A549 (cell line): ENCODE measurements at regions of chr17 and their contacts with region 1.

Region 1: GRCh38 chr17:37406635-37407461 is at the starts of genes ACACA and TADA2A:
- DNase-seq: peak; percentile 89 to 93
- ATAC-seq: peak; percentile 96 to 97
- H3K4me3 ChIP-seq: peak within 1 kb of the TSS; percentile 76
- H3K27ac ChIP-seq: peak within 1 kb of the TSS; percentile 91 to 98
- H3K4me1 ChIP-seq: peaks cover 16% of the 10 kb centered on the region; the same call in 2 of the 3 replicates
- CTCF ChIP-seq: no peak
- EP300 ChIP-seq: no peak
- POLR2A ChIP-seq: peak; percentile 90
- RAD21 ChIP-seq: 0 out of 5 replicates have a peak, but pooled peaks of 1 of the 2 experiments have one; percentile 10
- polyA plus RNA-seq, gene ACACA: 112 and 113 TPM in 2 replicates
- polyA plus RNA-seq, gene TADA2A: 22.2 and 27.1 TPM in 2 replicates

Region 2: DNA sequence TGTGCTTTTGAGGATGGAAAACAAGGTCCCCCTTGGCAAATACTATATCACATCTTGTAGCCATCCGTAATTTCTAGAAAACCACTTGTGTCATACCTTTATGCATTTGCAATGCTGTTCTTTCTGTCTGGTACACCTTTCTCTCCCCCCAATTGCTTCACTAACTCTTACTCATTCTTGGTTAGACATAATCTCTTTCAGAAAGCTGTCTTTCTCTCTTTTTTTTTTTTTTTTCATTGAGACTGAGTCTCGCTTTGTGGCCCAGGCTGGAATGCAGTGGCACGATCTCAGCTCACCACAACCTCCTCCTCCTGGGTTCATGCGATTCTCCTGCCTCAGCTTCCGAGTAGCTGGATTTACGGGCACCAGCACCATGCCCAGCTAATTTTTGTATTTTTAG is 126.0 kb before region 1 on chr17:
- CTCF ChIA-PET with region 1: no interaction called
- POLR2A ChIA-PET with region 1: no interaction called
- DNase-seq: no peak
- ATAC-seq: no peak
- H3K4me3 ChIP-seq: no peak overlapping the region
- H3K27ac ChIP-seq: no peak overlapping the region
- H3K4me1 ChIP-seq: peaks cover 21% of the 10 kb centered on the region
- CTCF ChIP-seq: no peak
- EP300 ChIP-seq: no peak
- POLR2A ChIP-seq: no peak
- RAD21 ChIP-seq: no peak

Region 3: DNA sequence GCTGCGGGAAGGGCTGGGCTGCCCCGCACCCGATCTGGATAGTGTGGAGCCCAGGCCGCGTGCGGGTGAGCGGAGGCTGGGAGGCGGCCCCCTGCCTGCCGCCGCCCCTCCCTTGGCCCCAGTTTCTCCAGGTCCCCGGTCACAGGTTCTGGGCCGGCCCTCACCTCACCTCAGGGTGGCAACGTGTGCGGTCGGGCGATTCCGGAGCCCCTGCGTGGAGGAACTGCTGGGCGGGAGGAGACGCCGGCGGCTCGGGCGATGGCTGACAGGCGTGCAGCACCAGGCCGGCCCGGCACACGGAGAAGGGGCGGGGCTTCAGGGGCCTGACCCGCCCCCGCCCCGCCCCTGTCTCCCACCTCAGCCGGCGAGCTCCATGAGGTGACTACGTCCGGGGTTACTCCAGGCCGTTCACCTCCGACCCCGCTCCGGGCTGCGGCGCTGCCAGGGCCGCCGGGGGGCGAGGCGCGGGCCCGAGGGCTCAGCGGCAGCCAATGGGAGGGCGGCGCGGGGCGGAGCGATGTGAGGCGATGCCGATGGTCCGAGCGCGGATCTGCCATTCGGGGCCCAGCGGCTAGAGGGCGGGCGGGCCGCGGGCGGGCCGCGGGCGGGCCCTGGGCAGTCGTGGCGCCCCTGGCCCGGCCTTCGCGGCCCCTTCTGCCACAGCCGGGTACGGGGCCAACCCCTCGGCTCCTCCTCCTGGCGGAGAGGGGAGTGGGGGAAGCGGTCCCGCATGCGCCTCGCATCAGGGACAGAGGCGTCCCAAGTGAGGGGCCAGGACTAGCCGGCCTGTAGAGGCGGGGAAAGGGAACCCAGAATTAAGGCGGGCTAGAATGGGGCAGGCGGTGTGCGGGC is 47.8 kb before region 1 on chr17:
- CTCF ChIA-PET with region 1: interaction called, 3 read pairs
- POLR2A ChIA-PET with region 1: interaction called, 14 read pairs
- DNase-seq: peak; percentile 96 to 98
- ATAC-seq: peak; percentile 89 to 90
- H3K4me3 ChIP-seq: peak overlapping the region; percentile 88
- H3K27ac ChIP-seq: peak overlapping the region; percentile 92 to 94
- H3K4me1 ChIP-seq: peaks cover 42% of the 10 kb centered on the region
- CTCF ChIP-seq: peak; percentile 9; the same call in 1 of the 3 replicates
- EP300 ChIP-seq: no peak
- POLR2A ChIP-seq: peak; percentile 86
- RAD21 ChIP-seq: no peak

Region 4: GRCh38 chr17:37430051-37430627 is 23.3 kb after region 1 on chr17:
- CTCF ChIA-PET with region 1: interaction called, 10 read pairs
- POLR2A ChIA-PET with region 1: interaction called, 10 read pairs
- DNase-seq: no peak
- ATAC-seq: peak; percentile 39; a peak in 1 of 6 replicates
- H3K4me3 ChIP-seq: no peak overlapping the region
- H3K27ac ChIP-seq: peak overlapping the region; percentile 6 to 12; a peak in 2 of 6 replicates
- H3K4me1 ChIP-seq: peaks cover 14% of the 10 kb centered on the region; the same call in 2 of the 3 replicates
- CTCF ChIP-seq: no peak
- EP300 ChIP-seq: no peak
- POLR2A ChIP-seq: no peak
- RAD21 ChIP-seq: no peak

Region 5: GRCh38 chr17:37609170-37610040 is 202.6 kb after region 1 on chr17 and contains the start of gene SYNRG:
- CTCF ChIA-PET with region 1: interaction called, 5 read pairs
- POLR2A ChIA-PET with region 1: interaction called, 11 read pairs
- DNase-seq: peak; percentile 98 to 99
- ATAC-seq: peak; percentile 97
- H3K4me3 ChIP-seq: peak within 1 kb of the TSS; percentile 72
- H3K27ac ChIP-seq: peak within 1 kb of the TSS; percentile 86 to 93
- H3K4me1 ChIP-seq: peaks cover 20% of the 10 kb centered on the region; the same call in 1 of the 3 replicates
- CTCF ChIP-seq: peak; percentile 33; the same call in 1 of the 3 replicates
- EP300 ChIP-seq: peak in 1 of 2 experiments; percentile 20; a peak in 1 of 5 replicates
- POLR2A ChIP-seq: peak; percentile 90
- RAD21 ChIP-seq: peak; percentile 36 to 52
- polyA plus RNA-seq, gene SYNRG: 17.4 and 24.8 TPM in 2 replicates